GM13976 (cell line): ENCODE measurements at regions of chr16 and their contacts with region 1.

Region 1: GRCh38 chr16:20300312-20301097 is 26.8 kb downstream of the GP2 start:
- DNase-seq: peak; percentile 67
- CTCF ChIP-seq: peak; percentile 60

Region 2: DNA sequence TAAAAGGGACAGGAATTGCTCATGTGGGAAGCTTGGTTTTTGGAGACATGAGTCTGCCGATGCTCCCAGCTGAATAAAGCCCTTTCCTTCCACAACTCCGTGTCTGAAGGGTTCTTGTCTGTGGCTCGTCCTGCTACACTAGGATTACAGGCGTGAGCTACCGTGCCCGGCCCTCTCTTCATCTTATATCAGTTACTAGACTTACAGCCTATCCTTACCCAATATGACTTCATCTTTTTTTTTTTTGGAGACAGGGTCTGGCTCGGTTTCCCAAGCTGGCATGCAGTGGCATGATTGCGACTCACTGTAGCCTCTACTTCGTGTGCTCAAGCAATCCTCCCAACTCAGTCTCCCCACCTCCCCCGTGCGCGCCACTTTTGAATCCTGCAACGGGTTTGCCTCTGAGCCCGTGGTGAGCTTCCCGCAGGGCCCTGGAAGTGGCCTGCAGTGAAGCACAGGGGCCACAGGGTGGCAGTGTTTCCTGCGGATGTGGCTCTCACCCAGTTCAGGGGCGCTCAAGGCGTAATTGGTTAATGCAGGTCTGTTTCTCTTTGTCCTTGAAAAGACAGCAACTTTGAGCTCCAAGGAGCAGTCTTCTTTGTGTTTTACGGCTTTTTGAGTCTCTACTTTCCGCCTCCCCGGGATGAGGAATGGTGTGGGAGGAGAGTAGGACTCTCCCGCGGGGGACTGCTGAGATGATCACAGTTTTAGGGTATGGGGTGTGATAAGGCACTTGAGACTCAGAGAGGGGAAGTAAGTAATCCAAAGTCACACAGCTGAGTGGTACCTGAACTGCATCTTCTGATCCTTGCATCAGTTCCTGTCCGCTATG is 393.1 kb before region 1 on chr16:
- in situ Hi-C with region 1: loop called (anchors 10 kb)
- DNase-seq: peak; percentile 75
- CTCF ChIP-seq: peak; percentile 93